GM10248 (cell line): ENCODE measurements at regions of chr14 and their contacts with region 1.

Region 1: GRCh38 chr14:55088356-55088755 is 36.9 kb downstream of the MAPK1IP1L start:
- DNase-seq: no peak
- CTCF ChIP-seq: no peak

Region 2: DNA sequence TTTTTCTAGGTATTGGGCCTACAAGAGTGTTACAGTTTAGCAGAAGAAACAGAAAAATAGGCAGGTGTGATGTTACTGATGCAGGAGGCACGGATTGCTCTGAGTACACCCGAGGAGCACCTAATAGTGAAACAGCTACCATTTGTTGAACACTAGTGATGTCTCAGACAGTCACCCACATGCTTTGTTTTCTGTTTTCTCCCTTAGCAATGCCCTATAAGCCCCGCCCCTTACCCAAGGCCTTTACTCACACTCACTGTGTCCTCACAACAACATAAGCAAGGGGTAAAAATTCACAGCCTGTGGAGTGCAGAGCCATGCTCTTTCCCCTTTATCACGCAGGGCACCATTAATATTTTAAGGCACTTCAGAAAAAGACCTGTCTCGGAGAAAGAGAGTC is 11.2 kb before region 1 on chr14:
- CTCF ChIA-PET with region 1: interaction called, 34 read pairs
- POLR2A ChIA-PET with region 1: interaction called, 7 read pairs
- DNase-seq: no peak
- CTCF ChIP-seq: no peak

Region 3: DNA sequence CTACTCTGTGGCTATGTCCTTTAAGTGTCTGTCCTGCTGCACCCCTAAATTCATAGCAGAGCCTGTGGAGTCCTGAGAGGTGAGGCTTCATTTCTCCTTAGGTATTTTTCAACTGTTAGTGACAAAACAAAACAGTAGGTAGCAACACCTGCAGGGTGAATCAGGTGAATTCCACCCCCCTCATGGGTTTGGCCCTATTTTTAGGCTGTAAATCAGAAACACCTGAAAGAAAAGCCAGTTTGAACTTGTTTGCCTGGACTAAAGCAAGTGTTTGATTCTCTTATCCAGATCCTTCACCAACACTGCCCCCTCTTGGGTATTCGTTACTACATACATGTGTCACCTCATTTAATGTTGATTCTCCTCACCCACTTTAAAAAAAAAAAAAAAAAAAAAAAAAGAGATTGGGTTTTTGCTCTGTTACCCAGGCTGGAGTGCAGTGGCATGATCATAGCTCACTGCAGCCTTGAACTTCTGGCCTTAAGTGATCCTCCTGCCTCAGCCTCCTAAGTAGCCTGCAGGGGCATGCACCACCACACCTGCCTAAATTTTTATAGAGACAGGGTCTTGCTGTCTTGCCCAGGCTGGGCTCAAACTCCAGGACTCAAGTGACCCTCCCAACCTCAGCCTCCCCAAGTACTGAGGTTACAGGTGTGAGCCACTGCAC is 341.8 kb after region 1 on chr14:
- CTCF ChIA-PET with region 1: no interaction called
- POLR2A ChIA-PET with region 1: no interaction called
- DNase-seq: peak; percentile 65
- CTCF ChIP-seq: peak; percentile 40